ENCODE measurements at regions of chr6 and their contacts with region 1.

Region 1: GRCh38 chr6:169751242-169752073 is at the starts of genes DYNLT2 and ERMARD:
- DNase-seq: peak; percentile 95
- ATAC-seq: peak; percentile 99
- total RNA-seq, gene DYNLT2: 0.41 TPM
- total RNA-seq, gene ERMARD: 6.5 TPM

Region 2: GRCh38 chr6:169701954-169702839 is 49.3 kb before region 1 on chr6 and contains the starts of genes C6orf120 and WDR27:
- intact Hi-C with region 1: loop called (anchors 5 kb)
- DNase-seq: peak; percentile 98
- ATAC-seq: peak; percentile 98
- total RNA-seq, gene C6orf120: 14.5 TPM
- total RNA-seq, gene WDR27: 9.6 TPM

Region 3: GRCh38 chr6:169724494-169725124 is 26.8 kb before region 1 on chr6 and contains the start of gene PHF10:
- intact Hi-C with region 1: loop called (anchors 2 kb)
- DNase-seq: peak; percentile 74
- ATAC-seq: peak; percentile 45
- total RNA-seq, gene PHF10: 55.2 TPM

Measured in Right ventricle myocardium inferior (tissue), 1 donor.